Right cardiac atrium (tissue), 5 donors: ENCODE measurements at regions of chr2 and their contacts with region 1.

Region 1: DNA sequence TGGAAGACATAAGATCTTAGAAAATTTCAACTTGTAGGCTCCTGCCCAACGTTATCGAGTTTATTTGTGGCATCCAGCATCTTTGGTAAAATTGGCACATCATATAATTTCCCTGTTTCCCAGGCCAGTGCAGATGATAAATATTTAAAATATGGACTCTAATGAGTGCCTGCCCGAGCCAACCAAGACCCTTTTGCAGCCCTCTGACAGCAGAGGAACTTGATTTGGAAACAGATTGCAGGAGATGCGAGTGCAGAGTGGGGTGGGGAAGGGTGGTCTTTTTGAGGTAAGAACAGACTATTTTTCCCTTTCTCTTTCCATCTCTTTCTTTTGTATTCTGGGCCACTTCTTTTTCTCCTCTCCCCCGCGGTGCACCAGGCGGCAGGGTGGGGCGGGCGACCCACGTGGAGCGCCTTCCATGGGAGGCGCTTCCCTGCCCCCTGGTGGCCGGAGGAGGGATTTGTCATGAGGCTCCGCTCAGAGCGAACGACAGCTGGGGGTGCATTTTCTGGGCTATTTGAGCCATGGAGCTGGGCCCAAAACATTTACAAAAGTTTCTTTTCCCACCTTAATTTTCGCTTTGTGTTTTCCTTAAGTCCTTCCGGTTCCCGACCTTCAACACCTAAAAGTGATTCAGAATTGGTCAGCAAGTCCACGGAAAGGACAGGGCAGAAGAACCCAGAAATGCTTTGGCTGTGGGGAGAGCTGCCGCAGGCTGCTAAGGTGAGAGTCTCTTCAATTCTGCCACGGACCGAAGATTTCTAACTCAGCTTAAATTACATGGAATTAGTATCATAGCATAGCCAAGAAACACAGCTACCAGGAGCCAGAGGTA is 32.7 kb downstream of the LPIN1 start:
- DNase-seq: peak; percentile 81 to 92 (median 91)
- ATAC-seq: peak; percentile 88 to 96
- H3K4me3 ChIP-seq: no peak overlapping the region
- H3K27ac ChIP-seq: no peak overlapping the region
- H3K4me1 ChIP-seq: no peaks in the 10 kb centered on the region
- H3K27me3 ChIP-seq: no peaks in the 10 kb centered on the region

Region 2: DNA sequence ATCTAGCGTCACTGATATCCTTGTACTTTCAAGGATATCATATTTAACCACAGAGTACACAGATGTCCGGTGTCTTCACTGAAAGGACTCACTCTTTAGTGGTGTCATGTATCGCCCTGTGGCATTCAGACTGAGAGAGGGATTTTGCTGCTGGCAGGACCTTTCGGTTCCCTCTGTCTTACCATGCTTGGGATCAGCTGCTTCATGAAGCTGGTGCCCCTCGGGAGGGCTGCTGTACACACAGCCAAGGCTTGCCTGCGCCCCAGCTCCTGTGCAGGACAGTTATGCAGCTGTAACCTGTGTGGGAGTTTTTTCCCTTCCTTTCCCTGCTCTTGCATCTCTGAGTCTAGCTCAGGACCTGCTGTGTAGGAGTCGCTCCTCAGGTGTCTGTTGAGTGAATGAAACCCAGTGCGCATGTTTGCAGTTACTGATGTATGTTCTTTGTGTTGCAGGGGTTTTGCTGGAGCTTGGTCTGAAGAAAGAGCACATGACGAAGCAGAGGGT is 180.9 kb before region 1 on chr2:
- intact Hi-C with region 1: no loop called
- DNase-seq: no peak
- ATAC-seq: no peak
- H3K4me3 ChIP-seq: no peak overlapping the region
- H3K27ac ChIP-seq: no peak overlapping the region
- H3K4me1 ChIP-seq: no peaks in the 10 kb centered on the region
- H3K27me3 ChIP-seq: no peaks in the 10 kb centered on the region

Region 3: DNA sequence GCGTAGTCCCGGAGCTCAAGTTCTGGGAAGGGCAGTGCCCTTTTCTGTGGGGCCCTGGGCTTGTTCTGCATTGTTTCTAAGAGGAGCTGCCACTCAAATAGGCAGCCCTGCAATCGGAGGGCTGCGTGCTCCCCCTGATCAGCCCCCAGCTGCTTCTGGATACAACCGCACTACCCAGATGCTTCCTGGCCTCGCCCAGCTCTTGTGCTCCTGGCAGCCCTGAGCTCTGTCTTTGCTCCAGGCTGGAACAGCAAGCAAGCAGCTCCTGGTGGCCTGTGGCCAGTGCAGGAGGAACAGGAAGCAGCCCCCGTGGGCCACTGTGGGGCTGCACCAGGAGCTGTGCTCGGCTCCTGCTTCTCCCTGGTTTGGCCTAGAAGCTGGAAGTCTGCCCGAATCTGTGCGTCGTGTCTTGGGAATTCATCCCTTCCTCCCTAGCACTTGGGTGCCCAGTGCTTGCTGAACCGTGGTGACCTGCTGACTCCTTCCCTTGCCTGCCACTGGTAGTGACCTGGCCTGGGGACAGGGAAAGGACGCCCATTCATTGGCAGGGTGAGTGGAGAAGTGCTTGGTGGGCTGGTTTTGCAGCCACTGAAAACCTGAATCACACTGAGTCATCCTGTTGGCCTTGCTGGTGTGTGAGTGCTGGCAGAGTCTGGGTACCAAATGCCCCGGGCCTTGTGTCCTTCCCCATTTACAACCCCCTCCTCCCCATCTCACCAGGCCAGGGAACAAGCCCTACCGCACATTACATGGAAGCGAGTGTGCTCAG is 81.9 kb before region 1 on chr2:
- intact Hi-C with region 1: loop called in 2 of 4 experiments (anchors 2 to 5 kb)
- DNase-seq: peak in 2 of 3 donors; percentile 72 to 75
- ATAC-seq: peak; percentile 4 to 43
- H3K4me3 ChIP-seq: no peak overlapping the region
- H3K27ac ChIP-seq: peak overlapping the region; percentile 27
- H3K4me1 ChIP-seq: peaks cover 8% of the 10 kb centered on the region
- H3K27me3 ChIP-seq: no peaks in the 10 kb centered on the region

Region 4: GRCh38 chr2:11743846-11744553 is 35.1 kb before region 1 on chr2:
- intact Hi-C with region 1: loop called in 2 of 4 experiments (anchors 5 kb)
- DNase-seq: peak; percentile 97 to 98 (median 98)
- ATAC-seq: peak; percentile 94 to 97
- H3K4me3 ChIP-seq: no peak overlapping the region
- H3K27ac ChIP-seq: peak overlapping the region; percentile 55
- H3K4me1 ChIP-seq: peaks cover 17% of the 10 kb centered on the region
- H3K27me3 ChIP-seq: no peaks in the 10 kb centered on the region